AG04449 (cell line): ENCODE measurements at regions of chr6 and their contacts with region 1.

Region 1: GRCh38 chr6:3808759-3809514 is 40.2 kb upstream of the FAM50B start:
- DNase-seq: peak; percentile 42
- H3K4me3 ChIP-seq: no peak overlapping the region
- CTCF ChIP-seq: peak; percentile 8

Region 2: GRCh38 chr6:3797231-3798054 is 11.5 kb before region 1 on chr6:
- CTCF ChIA-PET with region 1: interaction called, 15 read pairs
- POLR2A ChIA-PET with region 1: interaction called, 4 read pairs
- DNase-seq: peak; percentile 31
- H3K4me3 ChIP-seq: no peak overlapping the region
- CTCF ChIP-seq: no peak

Region 3: DNA sequence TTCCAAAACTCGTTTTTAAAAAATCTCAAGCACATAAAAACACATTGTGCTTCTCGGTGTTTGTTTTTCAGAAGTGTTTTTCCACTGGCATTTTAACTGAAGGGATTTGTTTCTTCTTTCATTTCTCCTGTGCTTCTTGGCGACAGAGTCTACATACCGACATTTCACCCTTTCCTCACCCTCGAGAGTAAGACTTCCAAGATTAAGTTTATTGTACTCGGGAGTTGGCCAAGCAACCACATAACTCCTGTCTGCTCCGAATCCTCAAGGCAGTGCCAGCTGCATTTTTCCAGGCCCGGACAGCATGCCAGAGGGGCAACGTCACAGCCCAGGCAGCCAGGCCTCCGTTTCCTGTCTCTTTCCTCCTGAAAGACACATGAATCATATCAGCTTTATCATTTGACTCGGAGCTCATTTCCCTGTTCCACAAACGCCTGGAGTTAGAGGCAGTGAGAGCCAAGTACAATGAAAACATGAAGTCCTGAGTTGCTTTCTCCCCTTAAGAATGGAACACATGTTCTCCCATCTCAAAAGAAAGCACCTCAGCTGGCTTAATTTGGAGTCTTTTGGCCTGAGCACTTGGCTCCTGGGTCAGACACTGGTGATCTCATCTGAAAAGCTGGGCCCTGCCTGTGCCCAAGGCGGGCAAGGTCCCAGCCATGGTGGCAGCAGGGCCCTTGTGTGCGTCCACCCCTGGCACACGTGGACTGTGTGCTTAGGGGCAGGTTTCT is 17.1 kb after region 1 on chr6:
- CTCF ChIA-PET with region 1: interaction called, 4 read pairs
- POLR2A ChIA-PET with region 1: interaction called, 10 read pairs
- DNase-seq: peak; percentile 97
- H3K4me3 ChIP-seq: peak overlapping the region; percentile 23; the same call in 1 of the 2 replicates
- CTCF ChIP-seq: no peak

Region 4: DNA sequence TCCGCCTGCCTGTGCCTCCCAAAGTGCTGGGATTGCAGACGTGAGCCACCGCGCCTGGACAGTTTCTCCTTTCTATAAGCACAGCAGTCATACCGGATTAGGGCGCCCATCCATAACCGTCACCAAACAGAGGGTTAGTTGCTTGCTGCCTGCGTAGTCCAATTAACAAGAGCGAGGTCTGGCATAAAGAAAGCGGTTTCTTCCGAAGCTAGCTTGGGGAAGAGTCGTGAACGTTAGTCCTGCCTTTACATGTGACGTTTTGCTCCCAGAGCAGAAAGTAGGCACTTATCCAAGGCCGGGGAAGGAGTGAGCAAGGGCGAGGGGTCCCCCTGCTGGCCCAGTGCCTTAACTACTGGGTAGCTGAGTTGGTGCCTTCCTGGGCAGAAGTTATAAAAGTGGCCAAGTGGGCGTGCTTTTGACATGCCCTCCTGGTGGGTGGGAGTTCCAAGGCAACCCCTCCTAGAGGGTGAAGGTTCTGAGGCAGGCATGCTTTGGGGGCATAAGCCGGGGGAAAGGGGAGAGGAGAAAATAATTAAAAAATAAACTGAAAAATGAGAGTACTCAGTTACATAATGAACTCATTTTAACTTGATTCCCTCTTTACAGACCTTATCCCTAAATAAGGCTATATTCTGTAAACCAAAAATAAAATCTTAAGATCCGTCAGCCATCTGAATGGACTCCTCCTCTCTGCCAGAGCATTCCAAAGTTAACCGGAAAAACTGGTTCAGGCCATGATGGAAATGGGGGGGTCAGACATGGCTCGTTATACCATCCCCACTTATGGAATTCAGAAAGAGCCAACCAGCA is 182.0 kb after region 1 on chr6:
- CTCF ChIA-PET with region 1: no interaction called
- POLR2A ChIA-PET with region 1: no interaction called
- DNase-seq: peak; percentile 50
- H3K4me3 ChIP-seq: peak overlapping the region; percentile 23
- CTCF ChIP-seq: peak; percentile 94